ENCODE measurements at regions of chr2 and their contacts with region 1.

Region 1: DNA sequence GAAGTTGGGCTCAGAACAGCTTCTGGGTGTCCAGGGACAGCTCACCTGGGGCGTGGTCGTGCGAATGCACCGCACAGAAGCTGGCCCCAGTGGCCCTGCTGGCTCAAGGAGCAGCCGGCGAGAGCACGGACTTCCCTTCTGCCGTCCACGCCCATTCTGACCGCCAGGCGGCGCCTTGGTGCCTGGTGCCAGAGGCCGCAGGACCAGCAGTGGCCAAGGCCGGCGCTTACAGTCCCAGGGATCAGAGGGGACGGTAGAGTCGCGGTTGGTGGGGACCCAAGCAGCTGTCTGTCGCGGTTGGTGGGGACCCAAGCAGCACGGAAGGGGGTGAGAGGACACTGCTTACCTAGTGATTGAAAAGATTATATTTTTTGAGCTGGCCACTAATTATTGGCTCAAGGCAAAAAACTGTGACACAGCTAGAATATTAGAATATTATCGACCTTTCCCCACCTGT is 25.7 kb downstream of the NPPC start:
- DNase-seq: no peak
- H3K4me3 ChIP-seq: no peak overlapping the region
- H3K27ac ChIP-seq: no peak overlapping the region
- H3K4me1 ChIP-seq: no peaks in the 10 kb centered on the region
- H3K27me3 ChIP-seq: peaks cover 0 to 24% (median 0%) of the 10 kb centered on the region in 4 donors
- CTCF ChIP-seq: peak; percentile 38 to 77 (median 46)
- EP300 ChIP-seq: no peak
- POLR2A ChIP-seq: no peak

Region 2: GRCh38 chr2:230913406-230914143 is 986.9 kb before region 1 on chr2:
- intact Hi-C with region 1: no loop called
- DNase-seq: no peak
- H3K4me3 ChIP-seq: no peak overlapping the region
- H3K27ac ChIP-seq: no peak overlapping the region
- H3K4me1 ChIP-seq: peaks cover 0 to 5% (median 0%) of the 10 kb centered on the region in 4 donors
- H3K27me3 ChIP-seq: peaks cover 0 to 10% (median 0%) of the 10 kb centered on the region in 4 donors
- CTCF ChIP-seq: peak; percentile 47 to 64 (median 50)
- EP300 ChIP-seq: no peak
- POLR2A ChIP-seq: no peak

Region 3: GRCh38 chr2:232113821-232114220 is 213.3 kb after region 1 on chr2:
- intact Hi-C with region 1: no loop called
- DNase-seq: no peak
- H3K4me3 ChIP-seq: no peak overlapping the region
- H3K27ac ChIP-seq: no peak overlapping the region
- H3K4me1 ChIP-seq: no peaks in the 10 kb centered on the region
- H3K27me3 ChIP-seq: no peaks in the 10 kb centered on the region
- CTCF ChIP-seq: no peak
- EP300 ChIP-seq: no peak
- POLR2A ChIP-seq: no peak

Region 4: GRCh38 chr2:232327105-232328041 is 426.9 kb after region 1 on chr2:
- intact Hi-C with region 1: loop called (anchors 5 kb)
- DNase-seq: no peak
- H3K4me3 ChIP-seq: no peak overlapping the region
- H3K27ac ChIP-seq: no peak overlapping the region
- H3K4me1 ChIP-seq: peaks cover 0 to 13% (median 7%) of the 10 kb centered on the region in 4 donors
- H3K27me3 ChIP-seq: no peaks in the 10 kb centered on the region
- CTCF ChIP-seq: peak; percentile 66 to 82 (median 75)
- EP300 ChIP-seq: no peak
- POLR2A ChIP-seq: no peak

Region 5: GRCh38 chr2:232438951-232439757 is 538.6 kb after region 1 on chr2:
- intact Hi-C with region 1: loop called (anchors 5 kb)
- DNase-seq: no peak
- H3K4me3 ChIP-seq: no peak overlapping the region
- H3K27ac ChIP-seq: no peak overlapping the region
- H3K4me1 ChIP-seq: no peaks in the 10 kb centered on the region
- H3K27me3 ChIP-seq: peaks cover 0 to 8% (median 0%) of the 10 kb centered on the region in 4 donors
- CTCF ChIP-seq: peak; percentile 27 to 69 (median 33)
- EP300 ChIP-seq: no peak
- POLR2A ChIP-seq: no peak

Region 6: DNA sequence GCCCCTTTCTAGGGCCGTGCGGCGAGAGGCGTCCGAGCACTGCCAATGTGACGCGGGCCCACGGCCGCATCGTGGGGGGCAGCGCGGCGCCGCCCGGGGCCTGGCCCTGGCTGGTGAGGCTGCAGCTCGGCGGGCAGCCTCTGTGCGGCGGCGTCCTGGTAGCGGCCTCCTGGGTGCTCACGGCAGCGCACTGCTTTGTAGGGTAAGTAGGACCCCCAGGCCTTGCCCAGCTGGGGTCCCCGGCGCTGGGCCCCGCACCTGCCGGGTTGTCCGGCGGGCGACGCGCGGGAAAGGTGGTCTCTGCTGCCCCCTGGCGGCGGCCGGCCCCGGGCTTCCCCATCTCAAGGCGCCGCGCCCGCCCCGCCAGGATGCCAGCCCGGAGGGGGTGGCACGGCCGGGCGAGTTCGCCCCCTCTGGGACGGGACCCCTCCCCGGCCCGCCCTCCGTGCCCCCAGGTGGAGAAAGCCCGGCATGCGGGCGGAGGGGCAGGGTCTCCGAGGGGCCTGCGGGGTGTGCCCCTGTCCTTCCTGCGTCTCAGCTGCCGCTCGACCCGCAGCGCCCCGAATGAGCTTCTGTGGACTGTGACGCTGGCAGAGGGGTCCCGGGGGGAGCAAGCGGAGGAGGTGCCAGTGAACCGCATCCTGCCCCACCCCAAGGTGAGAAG is 621.6 kb after region 1 on chr2:
- intact Hi-C with region 1: loop called (anchors 10 kb)
- DNase-seq: no peak
- H3K4me3 ChIP-seq: peak overlapping the region; percentile 40 to 52 (median 42)
- H3K27ac ChIP-seq: no peak overlapping the region
- H3K4me1 ChIP-seq: peaks cover 31 to 43% (median 38%) of the 10 kb centered on the region in 4 donors
- H3K27me3 ChIP-seq: peaks cover 6 to 95% (median 44%) of the 10 kb centered on the region in 4 donors
- CTCF ChIP-seq: peak; percentile 83 to 98 (median 92)
- EP300 ChIP-seq: no peak
- POLR2A ChIP-seq: no peak